ENCODE measurements at regions of chr14 and their contacts with region 1.

Region 1: DNA sequence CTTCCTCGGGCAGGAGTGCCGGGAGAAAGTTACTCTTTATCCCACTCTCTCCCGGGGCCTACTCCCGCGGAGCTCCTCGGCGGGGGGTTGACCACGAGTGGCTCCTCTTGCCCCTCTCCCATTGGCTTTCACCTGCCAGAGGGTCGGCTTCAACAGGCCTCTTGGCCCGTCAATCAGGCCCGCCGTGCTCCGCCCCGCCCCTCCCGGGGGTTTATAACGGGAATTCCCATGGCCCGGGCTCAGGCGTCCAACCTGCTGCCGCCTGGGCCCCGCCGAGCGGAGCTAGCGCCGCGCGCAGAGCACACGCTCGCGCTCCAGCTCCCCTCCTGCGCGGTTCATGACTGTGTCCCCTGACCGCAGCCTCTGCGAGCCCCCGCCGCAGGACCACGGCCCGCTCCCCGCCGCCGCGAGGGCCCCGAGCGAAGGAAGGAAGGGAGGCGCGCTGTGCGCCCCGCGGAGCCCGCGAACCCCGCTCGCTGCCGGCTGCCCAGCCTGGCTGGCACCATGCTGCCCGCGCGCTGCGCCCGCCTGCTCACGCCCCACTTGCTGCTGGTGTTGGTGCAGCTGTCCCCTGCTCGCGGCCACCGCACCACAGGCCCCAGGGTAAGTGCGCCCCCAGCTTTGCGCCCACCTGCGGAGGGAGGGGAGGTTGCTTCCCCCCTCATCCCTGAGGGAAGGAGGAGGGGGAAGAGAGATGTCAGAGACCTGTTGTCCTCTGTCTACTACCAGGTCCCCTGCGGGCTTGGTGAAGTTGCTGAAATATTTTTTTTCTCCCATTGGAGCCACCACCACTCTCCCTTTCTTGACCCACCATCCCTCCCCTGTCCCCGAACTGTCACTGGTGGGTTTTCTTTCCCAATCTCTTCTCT is at the start of gene SMOC1:
- DNase-seq: peak; percentile 43
- H3K4me3 Mint-ChIP-seq: no peak within 1 kb of the TSS
- H3K27ac Mint-ChIP-seq: no peak within 1 kb of the TSS
- H3K4me1 Mint-ChIP-seq: no peaks in the 10 kb centered on the region
- H3K27me3 Mint-ChIP-seq: peaks cover 43% of the 10 kb centered on the region
- total RNA-seq, gene SMOC1: not detected

Region 2: DNA sequence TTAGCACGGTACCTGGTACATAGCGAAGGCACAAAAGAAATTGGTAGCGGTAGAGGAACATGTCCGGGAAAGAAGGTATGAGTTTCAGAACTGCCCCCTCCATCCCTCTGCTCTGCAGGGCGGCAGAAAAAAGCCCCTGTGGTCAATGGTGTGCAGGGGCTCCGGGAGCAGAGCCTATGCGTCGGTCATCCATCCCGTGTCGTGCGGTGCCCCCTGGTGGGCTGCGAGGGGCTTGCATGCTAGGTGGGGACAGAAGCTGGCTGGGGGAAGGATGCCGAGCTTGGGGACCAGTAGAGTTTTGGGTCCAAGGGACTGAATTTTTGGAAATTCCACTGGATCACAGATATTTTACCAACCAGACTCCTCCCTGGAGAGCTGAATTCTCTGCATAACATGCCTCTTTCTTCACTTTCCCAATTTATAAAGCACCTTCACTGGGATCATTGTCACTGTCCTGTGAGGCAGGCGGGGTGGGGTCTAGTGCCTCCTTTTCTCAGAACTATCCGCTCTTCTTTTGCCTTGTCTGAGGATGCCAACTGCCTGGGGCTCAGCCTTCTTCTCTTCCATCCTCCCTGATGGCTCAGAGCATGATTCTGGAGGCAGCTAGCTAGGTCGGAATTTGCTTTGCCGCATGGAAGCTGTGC is 148.5 kb after region 1 on chr14:
- CTCF ChIA-PET with region 1: interaction called, 16 read pairs
- POLR2A ChIA-PET with region 1: no interaction called
- intact Hi-C with region 1: no loop called
- DNase-seq: peak; percentile 77
- H3K4me3 Mint-ChIP-seq: no peak overlapping the region
- H3K27ac Mint-ChIP-seq: no peak overlapping the region
- H3K4me1 Mint-ChIP-seq: no peaks in the 10 kb centered on the region
- H3K27me3 Mint-ChIP-seq: no peaks in the 10 kb centered on the region